ENCODE measurements at regions of chr19 and their contacts with region 1.

Region 1: DNA sequence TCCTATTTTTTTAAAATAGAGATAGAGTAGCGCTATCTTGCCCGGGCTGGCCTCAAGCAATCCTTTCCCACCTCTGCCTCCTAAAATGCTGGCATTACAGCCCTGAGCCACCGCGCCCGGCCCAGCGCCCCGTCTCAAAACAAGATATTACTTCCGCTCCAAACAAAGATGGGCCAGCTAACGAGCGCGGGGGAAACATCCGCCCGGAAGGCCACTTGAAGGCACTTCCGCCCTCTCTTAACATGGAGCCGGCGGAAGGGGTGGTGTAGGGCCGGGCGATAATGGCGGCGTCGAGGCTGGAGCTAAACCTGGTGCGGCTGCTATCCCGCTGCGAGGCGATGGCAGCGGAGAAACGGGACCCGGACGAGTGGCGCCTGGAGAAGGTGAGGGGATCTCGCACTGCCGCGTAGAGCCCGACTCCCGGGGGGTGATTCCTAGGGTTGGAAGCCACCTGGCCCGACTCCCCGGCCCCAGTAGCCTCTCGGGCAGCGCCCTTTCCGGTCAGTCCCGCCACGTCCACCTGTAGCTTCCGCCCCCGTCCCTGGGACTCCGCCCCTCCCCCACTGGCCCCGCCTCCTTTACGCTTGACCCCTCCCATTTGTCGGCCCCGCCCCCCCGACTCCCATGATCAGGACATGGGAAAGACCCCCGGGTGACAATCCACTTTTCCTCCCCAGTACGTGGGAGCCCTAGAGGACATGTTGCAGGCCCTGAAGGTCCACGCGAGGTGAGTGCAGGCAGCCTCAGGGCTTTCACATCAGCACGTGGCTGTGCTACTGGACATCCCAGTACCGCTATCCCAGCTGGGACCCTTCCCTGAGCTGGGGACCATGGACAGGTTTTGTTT is at the start of gene USE1:
- DNase-seq: peak; percentile 94 to 96 (median 96)
- ATAC-seq: peak; percentile 95
- H3K4me3 ChIP-seq: peak within 1 kb of the TSS; percentile 68
- H3K27ac ChIP-seq: peak within 1 kb of the TSS; percentile 99
- H3K4me1 ChIP-seq: peaks cover 9 to 28% of the 10 kb centered on the region in 2 experiments
- H3K27me3 ChIP-seq: no peaks in the 10 kb centered on the region
- CTCF ChIP-seq: no peak
- EP300 ChIP-seq: no peak
- POLR2A ChIP-seq: peak; percentile 97
- RAD21 ChIP-seq: no peak; a peak in 1 of 4 replicates
- polyA plus RNA-seq, gene USE1: 39.3 to 46.7 TPM

Region 2: GRCh38 chr19:17226002-17226933 is 10.9 kb after region 1 on chr19 and contains the start of gene OCEL1:
- CTCF ChIA-PET with region 1: no interaction called
- POLR2A ChIA-PET with region 1: interaction called, 31 read pairs
- in situ Hi-C with region 1: no loop called
- intact Hi-C with region 1: no loop called
- DNase-seq: peak; percentile 87 to 99 (median 90)
- ATAC-seq: peak; percentile 95
- H3K4me3 ChIP-seq: peak within 1 kb of the TSS; percentile 76
- H3K27ac ChIP-seq: peak within 1 kb of the TSS; percentile 88
- H3K4me1 ChIP-seq: peaks cover 6 to 30% of the 10 kb centered on the region in 2 experiments; a peak in 4 of 5 replicates
- H3K27me3 ChIP-seq: no peaks in the 10 kb centered on the region
- CTCF ChIP-seq: no peak
- EP300 ChIP-seq: no peak
- POLR2A ChIP-seq: peak; percentile 91
- RAD21 ChIP-seq: no peak
- polyA plus RNA-seq, gene OCEL1: 8.0 to 10.7 TPM

Region 3: GRCh38 chr19:17235618-17236377 is 20.4 kb after region 1 on chr19:
- CTCF ChIA-PET with region 1: no interaction called
- POLR2A ChIA-PET with region 1: interaction called, 129 read pairs
- in situ Hi-C with region 1: no loop called
- intact Hi-C with region 1: no loop called
- DNase-seq: peak; percentile 85 to 90 (median 87)
- ATAC-seq: peak; percentile 88
- H3K4me3 ChIP-seq: peak overlapping the region; percentile 77
- H3K27ac ChIP-seq: peak overlapping the region; percentile 87
- H3K4me1 ChIP-seq: peaks cover 18 to 46% of the 10 kb centered on the region in 2 experiments
- H3K27me3 ChIP-seq: no peaks in the 10 kb centered on the region
- CTCF ChIP-seq: peak; percentile 48 to 94 (median 74); a peak in 5 of 6 replicates
- EP300 ChIP-seq: no peak
- POLR2A ChIP-seq: peak; percentile 39
- RAD21 ChIP-seq: peak; percentile 64 to 70

Measured in K562 (cell line).